HEK293 (cell line): ENCODE measurements at regions of chr5 and their contacts with region 1.

Region 1: DNA sequence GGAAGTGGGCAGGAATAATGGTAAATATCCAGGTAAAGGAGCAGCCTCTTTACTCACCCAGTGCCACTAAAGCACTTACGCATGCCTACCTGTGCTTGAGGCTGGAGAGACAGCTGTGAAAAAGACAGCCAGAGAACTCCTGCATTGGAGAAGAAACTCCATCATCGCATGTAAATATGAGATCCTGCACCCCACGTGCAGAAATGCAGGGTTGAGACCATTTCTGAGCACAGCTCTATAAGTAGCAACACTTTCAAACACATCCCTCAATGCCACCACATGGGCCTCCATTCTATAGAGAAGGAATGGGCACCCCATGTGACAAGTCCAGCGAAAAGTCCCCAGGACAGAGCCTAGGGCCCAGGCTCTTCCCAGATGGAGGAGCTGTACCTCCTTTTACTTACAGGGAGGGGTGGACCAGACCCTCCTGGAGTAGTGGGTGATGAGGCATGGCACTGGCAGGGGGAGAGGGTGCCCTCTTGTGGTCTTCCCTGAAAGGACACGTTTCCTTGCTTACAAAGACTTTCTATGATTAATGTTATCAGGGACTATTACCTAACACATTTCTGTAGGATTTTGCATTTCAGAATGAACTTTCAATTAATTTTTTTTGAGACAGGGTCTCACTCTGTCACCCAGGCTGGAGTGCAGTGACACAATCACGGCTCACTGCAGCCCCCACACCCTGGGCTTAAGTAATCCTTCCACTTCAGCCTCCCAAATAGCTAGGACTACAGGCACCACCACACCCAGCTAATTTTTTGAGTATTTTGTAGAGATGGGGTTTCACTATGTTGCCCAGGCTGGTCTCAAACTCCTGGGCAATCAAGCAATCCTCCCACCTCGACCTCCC is 55.3 kb upstream of the IL17B start:
- H3K4me3 ChIP-seq: no peak overlapping the region
- H3K27ac ChIP-seq: no peak overlapping the region
- H3K4me1 ChIP-seq: no peaks in the 10 kb centered on the region
- CTCF ChIP-seq: peak; percentile 83

Region 2: DNA sequence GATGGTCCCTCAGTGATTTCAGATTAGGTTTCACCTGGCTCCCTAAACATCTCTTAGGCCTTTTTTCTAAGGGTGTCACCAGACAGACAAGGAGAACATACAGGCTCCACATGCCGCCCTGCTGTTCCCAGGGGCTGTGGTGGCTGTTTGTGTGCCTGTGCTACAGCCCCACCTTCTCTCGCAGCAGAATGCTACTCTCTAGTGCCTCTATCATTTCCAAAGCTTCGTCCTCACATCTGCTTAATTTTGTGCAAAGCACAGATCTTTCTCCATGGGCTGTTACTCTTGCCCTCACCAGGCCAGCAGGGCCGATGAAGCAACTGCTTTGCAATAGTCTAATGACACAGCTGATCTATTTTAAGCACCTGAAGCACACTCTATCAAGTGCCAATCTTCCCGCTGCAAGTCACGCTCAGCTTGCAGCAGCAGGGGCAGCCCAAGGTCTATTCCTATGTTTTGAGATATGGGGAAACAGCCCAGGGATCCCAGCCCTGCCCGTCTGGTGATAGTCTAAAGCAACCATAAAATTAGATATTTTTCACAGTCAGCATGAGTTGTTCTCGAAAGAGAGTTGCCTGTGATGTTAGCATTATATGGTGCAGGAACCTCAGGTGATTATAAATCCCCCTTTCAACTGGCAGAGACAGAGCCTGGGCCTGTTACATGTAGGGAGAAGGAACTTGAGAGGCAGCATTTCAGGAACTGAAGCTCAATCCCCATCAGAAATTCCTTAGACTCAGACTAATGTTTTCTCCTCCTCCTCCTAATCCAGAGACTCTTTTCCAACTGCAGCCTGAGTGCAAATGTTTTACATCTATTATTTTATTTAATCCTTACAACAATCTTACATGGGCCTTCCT is 280.4 kb before region 1 on chr5:
- CTCF ChIA-PET with region 1: no interaction called
- POLR2A ChIA-PET with region 1: no interaction called
- H3K4me3 ChIP-seq: no peak overlapping the region
- H3K27ac ChIP-seq: no peak overlapping the region
- H3K4me1 ChIP-seq: no peaks in the 10 kb centered on the region
- CTCF ChIP-seq: no peak

Region 3: DNA sequence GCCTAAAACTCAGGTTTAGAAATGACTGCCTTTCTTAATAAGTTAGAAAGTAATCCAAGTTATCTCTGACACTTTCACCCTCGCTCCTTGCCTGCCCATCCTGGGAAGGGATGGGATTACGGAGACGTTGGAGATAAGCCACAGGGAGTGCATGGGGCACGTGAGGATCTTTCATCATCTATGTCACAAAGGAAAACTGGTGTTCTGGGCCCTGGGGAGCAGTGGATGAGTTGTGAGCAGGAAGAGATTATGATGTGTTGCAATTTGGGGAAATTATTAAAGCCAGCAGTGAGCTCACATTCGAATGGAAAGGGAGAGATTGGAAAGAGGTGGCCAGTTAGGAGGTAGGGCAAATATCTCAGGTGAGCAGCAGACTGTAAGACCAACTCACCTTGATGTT is 149.9 kb before region 1 on chr5:
- CTCF ChIA-PET with region 1: no interaction called
- POLR2A ChIA-PET with region 1: no interaction called
- H3K4me3 ChIP-seq: no peak overlapping the region
- H3K27ac ChIP-seq: no peak overlapping the region
- H3K4me1 ChIP-seq: no peaks in the 10 kb centered on the region
- CTCF ChIP-seq: no peak

Region 4: GRCh38 chr5:149310947-149311658 is 123.3 kb before region 1 on chr5:
- CTCF ChIA-PET with region 1: interaction called, 47 read pairs
- POLR2A ChIA-PET with region 1: no interaction called
- H3K4me3 ChIP-seq: no peak overlapping the region
- H3K27ac ChIP-seq: no peak overlapping the region
- H3K4me1 ChIP-seq: no peaks in the 10 kb centered on the region
- CTCF ChIP-seq: no peak

Region 5: GRCh38 chr5:149367249-149367971 is 67.0 kb before region 1 on chr5:
- CTCF ChIA-PET with region 1: interaction called, 212 read pairs
- POLR2A ChIA-PET with region 1: no interaction called
- H3K4me3 ChIP-seq: no peak overlapping the region
- H3K27ac ChIP-seq: no peak overlapping the region
- H3K4me1 ChIP-seq: no peaks in the 10 kb centered on the region
- CTCF ChIP-seq: peak; percentile 86

Region 6: GRCh38 chr5:149414405-149415060 is 19.9 kb before region 1 on chr5:
- CTCF ChIA-PET with region 1: interaction called, 17 read pairs
- POLR2A ChIA-PET with region 1: no interaction called
- H3K4me3 ChIP-seq: no peak overlapping the region
- H3K27ac ChIP-seq: no peak overlapping the region
- H3K4me1 ChIP-seq: peaks cover 6% of the 10 kb centered on the region; the same call in 1 of the 2 replicates
- CTCF ChIP-seq: no peak

Region 7: GRCh38 chr5:149551200-149552037 is 117.0 kb after region 1 on chr5 and contains the start of gene CSNK1A1:
- CTCF ChIA-PET with region 1: interaction called, 11 read pairs
- POLR2A ChIA-PET with region 1: interaction called, 6 read pairs
- H3K4me3 ChIP-seq: peak within 1 kb of the TSS; percentile 94
- H3K27ac ChIP-seq: peak within 1 kb of the TSS; percentile 97
- H3K4me1 ChIP-seq: peaks cover 11% of the 10 kb centered on the region
- CTCF ChIP-seq: peak; percentile 55; the same call in 1 of the 2 replicates

Region 8: GRCh38 chr5:149618581-149619251 is 184.3 kb after region 1 on chr5:
- CTCF ChIA-PET with region 1: interaction called, 16 read pairs
- POLR2A ChIA-PET with region 1: no interaction called
- H3K4me3 ChIP-seq: no peak overlapping the region
- H3K27ac ChIP-seq: no peak overlapping the region
- H3K4me1 ChIP-seq: no peaks in the 10 kb centered on the region
- CTCF ChIP-seq: peak; percentile 77